B cell (primary cell): ENCODE measurements at regions of chr7 and their contacts with region 1.

Region 1: DNA sequence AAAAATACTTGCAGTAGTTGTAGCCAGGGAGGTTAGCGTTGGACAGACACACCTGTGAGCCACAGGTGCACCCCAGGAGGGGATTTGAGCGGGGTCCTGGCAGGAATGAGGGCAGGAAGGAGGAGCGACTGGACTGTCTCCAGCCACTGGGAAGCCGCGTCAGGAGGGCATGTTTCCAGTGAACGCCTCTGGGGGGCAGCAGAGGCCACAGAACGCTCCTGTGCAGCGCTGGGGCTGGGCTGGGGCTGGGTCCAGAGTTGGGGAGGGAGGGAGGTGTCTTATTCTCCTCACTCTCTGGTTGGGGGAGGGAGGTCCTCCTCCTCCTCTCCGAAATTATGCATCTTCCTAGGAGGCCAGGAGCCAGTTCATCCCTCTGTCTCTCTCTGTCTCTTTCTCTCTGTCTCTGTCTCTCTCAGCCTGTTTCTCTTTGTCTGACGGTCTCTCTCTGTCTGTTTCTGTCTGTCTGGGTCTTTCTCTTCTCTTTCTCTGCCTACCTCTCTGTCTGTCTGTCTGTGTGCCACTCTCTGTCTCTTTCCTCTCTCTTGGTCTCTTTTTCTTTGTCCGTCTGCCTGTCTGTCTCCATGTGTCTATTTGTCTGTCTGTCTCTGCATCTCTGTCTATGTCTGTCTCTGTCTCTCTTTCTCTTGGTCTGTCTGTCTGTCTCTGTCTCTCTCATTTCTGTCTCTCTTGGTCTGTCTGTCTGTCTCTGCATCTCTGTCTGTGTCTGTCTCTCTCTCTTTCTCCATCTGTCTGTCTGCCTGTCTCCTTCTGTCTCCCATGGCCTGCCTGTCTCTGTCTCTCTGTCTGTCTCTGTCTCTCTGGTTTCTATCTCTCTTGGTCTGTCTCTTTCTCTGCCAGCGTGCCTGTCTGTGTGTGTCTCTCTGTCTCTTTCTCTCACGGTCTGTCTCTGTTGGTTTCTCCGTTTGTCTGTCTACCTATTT is 9.9 kb upstream of the PSMG3 start:
- DNase-seq: peak; percentile 74
- ATAC-seq: peak; percentile 99
- H3K4me3 ChIP-seq: no peak overlapping the region
- H3K4me3 Mint-ChIP-seq: no peak overlapping the region
- H3K27ac ChIP-seq: no peak overlapping the region
- H3K27ac Mint-ChIP-seq: no peak overlapping the region
- H3K4me1 ChIP-seq: peaks cover 7 to 8% of the 10 kb centered on the region in 2 donors
- H3K4me1 Mint-ChIP-seq: peaks cover 13% of the 10 kb centered on the region
- H3K27me3 ChIP-seq: no peaks in the 10 kb centered on the region
- H3K27me3 Mint-ChIP-seq: no peaks in the 10 kb centered on the region
- CTCF ChIP-seq: peak; percentile 85

Region 2: GRCh38 chr7:1563981-1564602 is 15.7 kb before region 1 on chr7:
- CTCF ChIA-PET with region 1: no interaction called
- POLR2A ChIA-PET with region 1: no interaction called
- intact Hi-C with region 1: no loop called
- DNase-seq: no peak
- ATAC-seq: no peak
- H3K4me3 ChIP-seq: no peak overlapping the region
- H3K4me3 Mint-ChIP-seq: no peak overlapping the region
- H3K27ac ChIP-seq: no peak overlapping the region
- H3K27ac Mint-ChIP-seq: no peak overlapping the region
- H3K4me1 ChIP-seq: peaks cover 3 to 5% of the 10 kb centered on the region in 2 donors
- H3K4me1 Mint-ChIP-seq: peaks cover 3% of the 10 kb centered on the region
- H3K27me3 ChIP-seq: no peaks in the 10 kb centered on the region
- H3K27me3 Mint-ChIP-seq: peaks cover 4% of the 10 kb centered on the region
- CTCF ChIP-seq: no peak

Region 3: GRCh38 chr7:1986366-1987083 is 406.8 kb after region 1 on chr7:
- CTCF ChIA-PET with region 1: no interaction called
- POLR2A ChIA-PET with region 1: no interaction called
- intact Hi-C with region 1: no loop called
- DNase-seq: no peak
- ATAC-seq: no peak
- H3K4me3 ChIP-seq: no peak overlapping the region
- H3K4me3 Mint-ChIP-seq: no peak overlapping the region
- H3K27ac ChIP-seq: no peak overlapping the region
- H3K27ac Mint-ChIP-seq: no peak overlapping the region
- H3K4me1 ChIP-seq: no peaks in the 10 kb centered on the region
- H3K4me1 Mint-ChIP-seq: peaks cover 1% of the 10 kb centered on the region
- H3K27me3 ChIP-seq: no peaks in the 10 kb centered on the region
- H3K27me3 Mint-ChIP-seq: no peaks in the 10 kb centered on the region
- CTCF ChIP-seq: no peak

Region 4: GRCh38 chr7:2209146-2209960 is 629.6 kb after region 1 on chr7:
- CTCF ChIA-PET with region 1: interaction called, 10 read pairs
- POLR2A ChIA-PET with region 1: no interaction called
- intact Hi-C with region 1: loop called (anchors 1 kb)
- DNase-seq: peak; percentile 74
- ATAC-seq: peak; percentile 75
- H3K4me3 ChIP-seq: no peak overlapping the region
- H3K4me3 Mint-ChIP-seq: no peak overlapping the region
- H3K27ac ChIP-seq: no peak overlapping the region
- H3K27ac Mint-ChIP-seq: peak overlapping the region; percentile 7
- H3K4me1 ChIP-seq: peaks cover 0 to 5% of the 10 kb centered on the region in 2 donors
- H3K4me1 Mint-ChIP-seq: peaks cover 9% of the 10 kb centered on the region
- H3K27me3 ChIP-seq: no peaks in the 10 kb centered on the region
- H3K27me3 Mint-ChIP-seq: no peaks in the 10 kb centered on the region
- CTCF ChIP-seq: peak; percentile 71

Region 5: DNA sequence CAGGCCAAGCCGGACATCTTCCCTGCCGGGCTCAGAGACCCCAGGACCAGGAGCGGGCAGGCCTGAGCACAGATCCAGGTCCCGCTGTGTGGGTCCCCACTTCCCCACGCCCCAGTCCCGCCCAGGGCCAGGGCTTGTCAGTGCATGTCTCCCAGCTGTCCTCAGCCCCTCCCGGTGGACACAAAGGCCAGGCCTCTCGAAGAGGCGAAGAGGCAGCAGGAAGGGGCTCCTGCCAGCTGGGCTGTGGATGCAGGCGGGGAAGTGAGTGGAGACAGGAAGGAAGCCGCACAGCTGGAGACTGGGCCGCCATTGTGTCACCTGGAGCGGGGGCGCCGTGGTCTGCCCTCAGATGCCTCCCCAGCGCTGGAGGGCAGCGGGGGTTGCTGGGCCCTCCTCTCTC is 891.6 kb after region 1 on chr7:
- CTCF ChIA-PET with region 1: interaction called, 12 read pairs
- POLR2A ChIA-PET with region 1: no interaction called
- intact Hi-C with region 1: no loop called
- DNase-seq: no peak
- ATAC-seq: no peak
- H3K4me3 ChIP-seq: no peak overlapping the region
- H3K4me3 Mint-ChIP-seq: no peak overlapping the region
- H3K27ac ChIP-seq: no peak overlapping the region
- H3K27ac Mint-ChIP-seq: no peak overlapping the region
- H3K4me1 ChIP-seq: peaks cover 0 to 5% of the 10 kb centered on the region in 2 donors
- H3K4me1 Mint-ChIP-seq: peaks cover 4% of the 10 kb centered on the region
- H3K27me3 ChIP-seq: peaks cover 0 to 12% (median 2%) of the 10 kb centered on the region in 4 experiments
- H3K27me3 Mint-ChIP-seq: peaks cover 9% of the 10 kb centered on the region
- CTCF ChIP-seq: no peak